ENCODE measurements at regions of chr12 and their contacts with region 1.

Region 1: DNA sequence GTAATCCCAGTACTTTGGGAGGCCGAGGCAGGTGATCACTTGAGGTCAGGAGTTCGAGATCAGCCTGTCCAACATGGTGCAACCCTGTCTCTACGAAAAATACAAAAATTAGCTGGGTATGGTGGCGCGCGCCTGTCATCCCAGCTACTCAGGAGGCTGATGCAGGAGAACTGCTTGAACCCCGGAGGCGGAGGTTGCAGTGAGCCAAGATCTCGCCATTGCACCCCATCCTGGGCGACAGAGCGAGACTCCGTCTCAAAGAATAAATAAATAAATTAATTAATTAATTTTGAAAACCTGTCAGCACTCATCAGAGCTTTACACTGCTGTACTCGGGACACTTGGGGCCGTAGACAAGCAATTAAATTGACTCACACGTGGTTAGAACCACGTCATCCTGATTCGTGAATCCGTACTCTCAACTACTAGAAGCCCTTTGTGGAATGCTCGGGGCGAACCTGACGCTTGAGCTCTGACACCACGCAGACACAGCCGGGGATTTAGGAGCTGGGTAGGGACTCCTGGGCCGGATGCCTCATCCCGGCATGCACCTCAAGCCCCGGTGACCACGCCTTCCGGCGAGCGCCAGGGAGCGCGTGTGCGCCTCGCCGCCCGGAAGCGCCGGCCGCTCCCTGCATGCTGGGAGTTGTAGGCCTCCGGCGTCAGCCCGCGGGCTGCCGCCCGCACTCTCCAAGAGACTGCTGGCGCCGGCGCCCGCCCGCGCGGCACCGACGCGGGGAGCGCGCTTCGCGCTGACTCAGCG is at the start of gene XPOT:
- DNase-seq: peak; percentile 94 to 98 (median 96)
- ATAC-seq: peak; percentile 96 to 99 (median 96)
- H3K4me3 ChIP-seq: peak within 1 kb of the TSS; percentile 73 to 99 (median 90)
- H3K27ac ChIP-seq: peak within 1 kb of the TSS; percentile 90 to 99 (median 96)
- H3K4me1 ChIP-seq: peaks cover 0 to 20% (median 8%) of the 10 kb centered on the region in 12 donors
- H3K27me3 ChIP-seq: no peaks in the 10 kb centered on the region
- CTCF ChIP-seq: no peak
- POLR2A ChIP-seq: peak in 1 of 2 donors; percentile 46
- total RNA-seq, gene XPOT: 12.3 to 37.6 (median 22.0) TPM

Region 2: DNA sequence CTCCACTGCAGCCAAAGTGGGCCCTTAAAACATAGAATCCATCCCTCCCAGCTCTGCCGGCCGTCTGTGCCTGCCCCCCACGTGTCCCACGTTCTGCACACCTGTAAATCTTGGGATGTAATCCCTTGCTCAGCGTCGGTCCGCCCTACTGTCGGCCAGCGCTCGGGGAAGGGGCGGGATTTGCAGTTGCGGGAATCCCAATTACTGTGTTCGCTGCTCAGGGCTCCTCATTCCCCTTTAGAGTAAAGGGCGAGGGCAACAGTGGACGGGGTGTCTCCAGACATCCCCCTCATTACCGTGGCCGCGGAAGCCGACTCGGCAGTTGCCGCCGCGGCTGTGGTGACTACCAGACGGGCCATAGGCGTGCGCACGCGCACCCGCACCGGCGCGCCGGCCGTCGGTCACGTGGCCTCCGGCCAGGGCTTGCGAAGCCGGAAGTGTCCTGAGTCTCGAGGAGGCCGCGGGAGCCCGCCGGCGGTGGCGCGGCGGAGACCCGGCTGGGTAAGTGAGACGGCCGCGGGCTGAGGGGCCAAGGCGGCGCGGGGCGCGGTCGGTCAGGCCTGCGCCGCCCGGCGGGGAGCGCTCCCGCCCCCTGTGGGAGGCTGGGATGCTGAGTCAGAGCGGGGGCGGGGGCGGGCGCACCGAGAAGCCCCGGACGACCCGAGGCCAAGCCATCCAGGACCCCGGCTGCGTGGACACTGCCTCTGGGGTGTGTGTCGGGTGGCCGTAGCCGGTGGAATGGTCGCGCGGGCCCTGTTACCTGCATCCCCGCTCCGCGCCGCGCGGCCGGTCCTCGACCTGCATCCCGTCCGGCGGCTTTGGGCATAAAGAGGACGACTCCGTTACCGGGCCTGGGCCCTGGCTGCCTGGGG is 48.0 kb after region 1 on chr12 and contains the start of gene TBK1:
- intact Hi-C with region 1: loop called in 1 of 10 experiments (anchors 10 kb)
- DNase-seq: peak; percentile 90 to 94 (median 92)
- ATAC-seq: peak; percentile 89 to 98 (median 96)
- H3K4me3 ChIP-seq: peak within 1 kb of the TSS; percentile 69 to 100 (median 93)
- H3K27ac ChIP-seq: peak within 1 kb of the TSS; percentile 84 to 99 (median 95)
- H3K4me1 ChIP-seq: peaks cover 0 to 42% (median 16%) of the 10 kb centered on the region in 12 donors
- H3K27me3 ChIP-seq: no peaks in the 10 kb centered on the region
- CTCF ChIP-seq: peak in 3 of 12 donors; percentile 10 to 39 (median 23)
- POLR2A ChIP-seq: peak; percentile 7 to 84
- total RNA-seq, gene TBK1: 8.5 to 16.9 (median 10.9) TPM